Kidney (tissue), 22 donors: ENCODE measurements at regions of chr2 and their contacts with region 1.

Region 1: DNA sequence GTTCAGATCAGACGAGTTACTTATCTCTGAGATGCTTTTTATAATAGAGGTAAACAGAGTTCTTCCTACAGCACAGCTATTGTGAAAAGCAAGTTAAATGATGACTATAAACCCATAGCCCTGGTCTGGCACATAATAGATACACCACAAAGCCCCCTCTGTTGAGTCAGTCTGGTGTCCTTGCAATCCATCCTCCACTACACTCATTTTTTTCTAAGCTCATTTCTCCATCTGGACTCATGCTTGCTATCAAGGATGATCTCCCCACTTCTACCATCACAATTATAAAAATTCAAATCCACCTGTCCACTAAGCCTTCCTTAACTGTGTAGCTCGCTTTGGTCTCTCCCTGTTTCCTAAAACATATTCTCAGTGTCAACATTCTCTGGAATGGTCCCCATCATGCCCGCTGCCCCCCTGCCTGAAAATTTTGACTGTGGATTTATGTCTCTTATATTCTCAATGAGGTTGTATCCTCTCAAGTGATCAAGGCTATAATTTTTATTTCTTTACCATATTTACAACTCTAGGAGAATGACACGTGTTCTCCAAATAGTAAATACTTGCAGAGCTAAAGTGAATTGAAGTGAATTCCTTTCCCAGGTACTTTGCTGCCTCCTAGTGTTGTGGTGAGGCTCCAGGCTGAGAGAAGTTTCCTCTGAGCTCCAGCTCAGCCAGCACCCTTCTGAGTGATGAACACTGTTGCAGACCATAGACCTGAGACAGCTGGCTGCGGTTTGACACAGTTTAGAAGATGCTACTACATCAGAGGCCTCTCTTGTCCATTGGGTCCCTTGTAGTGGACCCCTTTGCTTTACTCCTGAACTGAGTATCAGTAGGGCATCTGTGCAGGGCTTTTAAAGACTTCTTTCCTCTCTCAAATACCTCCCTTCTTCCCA is 108.7 kb downstream of the DPP10 start:
- DNase-seq: peak in 4 of 5 donors; percentile 50 to 86 (median 66)
- H3K4me3 ChIP-seq: no peak overlapping the region
- H3K27ac ChIP-seq: no peak overlapping the region
- H3K4me1 ChIP-seq: peaks cover 0 to 9% (median 2%) of the 10 kb centered on the region in 3 donors
- H3K27me3 ChIP-seq: no peaks in the 10 kb centered on the region
- CTCF ChIP-seq: peak; percentile 76

Region 2: GRCh38 chr2:113996671-113997594 is 554.2 kb before region 1 on chr2:
- intact Hi-C with region 1: loop called (anchors 10 kb)
- DNase-seq: no peak
- H3K4me3 ChIP-seq: no peak overlapping the region
- H3K27ac ChIP-seq: no peak overlapping the region
- H3K4me1 ChIP-seq: no peaks in the 10 kb centered on the region
- H3K27me3 ChIP-seq: no peaks in the 10 kb centered on the region
- CTCF ChIP-seq: no peak

Region 3: DNA sequence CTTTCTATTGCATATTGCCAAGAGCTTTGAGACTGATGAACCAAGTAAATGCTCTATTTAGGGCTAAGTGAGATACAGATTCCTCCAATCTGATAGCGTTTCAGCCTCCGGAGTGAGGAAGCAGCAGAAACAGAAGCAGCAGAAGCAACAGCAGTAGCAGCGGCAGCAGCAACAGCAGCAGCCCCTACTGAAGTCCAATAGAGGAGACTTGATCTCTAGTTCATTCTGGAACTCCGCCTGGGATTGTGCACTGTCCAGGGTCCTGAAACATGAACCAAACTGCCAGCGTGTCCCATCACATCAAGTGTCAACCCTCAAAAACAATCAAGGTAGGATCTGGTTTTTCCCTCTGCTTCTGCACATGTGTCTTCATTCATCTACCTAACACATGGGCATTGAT is 108.6 kb before region 1 on chr2 and contains the start of gene DPP10:
- intact Hi-C with region 1: no loop called
- DNase-seq: peak in 4 of 5 donors; percentile 52 to 84 (median 79)
- H3K4me3 ChIP-seq: no peak within 1 kb of the TSS
- H3K27ac ChIP-seq: no peak within 1 kb of the TSS
- H3K4me1 ChIP-seq: no peaks in the 10 kb centered on the region
- H3K27me3 ChIP-seq: no peaks in the 10 kb centered on the region
- CTCF ChIP-seq: no peak
- total RNA-seq, gene DPP10: not detected